Posterior cingulate gyrus (tissue), 11 donors: ENCODE measurements at regions of chr1 and their contacts with region 1.

Region 1: DNA sequence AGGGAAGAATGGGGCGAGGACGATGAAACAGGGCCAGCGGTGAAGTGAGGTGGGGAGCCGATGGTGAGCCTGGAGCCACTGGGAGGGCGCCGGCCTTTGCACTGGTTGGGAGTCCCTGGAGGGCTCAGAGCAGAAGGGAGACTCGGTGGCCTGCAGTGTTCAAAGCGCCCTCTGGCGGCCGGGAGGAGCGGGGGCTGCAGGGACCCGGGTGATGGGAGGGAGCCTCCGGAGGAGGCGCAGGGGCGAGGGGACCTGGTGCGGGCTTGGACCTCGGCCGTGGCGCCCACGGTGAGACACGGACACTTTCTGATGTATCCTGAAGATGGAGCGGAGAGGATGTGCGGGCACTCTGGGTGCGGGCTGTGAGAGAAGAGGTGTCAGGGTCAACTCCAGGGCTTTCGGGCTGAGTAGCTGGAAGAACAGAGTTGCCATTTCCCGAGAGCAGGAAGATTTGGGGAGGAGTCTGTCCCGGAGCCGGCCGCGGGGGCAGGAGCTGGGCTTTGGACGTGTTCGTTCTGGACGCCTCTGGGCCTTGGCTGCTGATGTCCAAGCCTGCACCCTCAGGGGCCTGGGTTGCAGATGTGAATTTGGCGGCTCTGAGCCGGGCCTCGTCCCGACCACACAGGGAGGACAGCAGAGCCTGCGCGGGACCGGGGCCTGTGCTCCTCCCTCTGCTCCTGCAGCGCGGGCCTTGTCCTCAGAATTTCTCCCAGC is 29.7 kb downstream of the HEYL start:
- DNase-seq: peak in 4 of 10 donors; percentile 21 to 83 (median 40)

Region 2: GRCh38 chr1:39653546-39654031 is 43.8 kb after region 1 on chr1:
- intact Hi-C with region 1: loop called (anchors 1 kb)
- DNase-seq: peak; percentile 60 to 97 (median 83)

Region 3: DNA sequence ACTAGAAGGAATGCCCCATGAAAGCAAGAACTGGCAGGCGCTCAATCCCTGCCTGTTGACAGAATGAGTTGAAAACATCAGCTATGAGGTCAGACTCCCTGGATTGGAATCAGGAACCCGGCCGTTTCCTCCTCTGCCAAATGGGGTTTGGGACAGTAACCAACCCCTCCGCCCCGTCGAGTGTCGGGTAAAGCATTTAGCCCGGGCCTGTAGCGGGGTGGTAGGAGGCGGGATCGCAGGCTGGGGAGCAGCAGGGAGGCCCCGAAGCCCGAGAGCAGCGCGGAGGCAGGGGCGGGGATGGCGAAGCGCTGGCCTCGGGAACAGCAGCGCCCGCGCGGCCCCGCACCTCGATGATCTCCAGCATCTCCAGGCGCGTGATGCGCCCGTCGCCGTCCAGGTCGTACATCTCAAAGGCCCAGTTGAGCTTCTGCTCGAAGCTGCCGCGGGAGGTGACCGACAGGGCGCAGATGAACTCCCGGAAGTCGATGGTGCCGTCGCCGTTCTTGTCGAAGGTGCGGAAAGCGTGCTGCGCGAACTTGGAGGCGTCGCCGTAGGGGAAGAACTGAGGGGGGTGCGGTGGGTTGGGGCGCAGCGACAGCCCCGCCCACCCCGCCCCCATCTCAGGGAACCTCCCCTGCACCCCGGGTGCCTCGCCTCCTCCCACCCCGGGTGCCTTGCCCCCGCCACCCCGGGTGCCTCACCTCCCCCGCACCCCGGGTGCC is 74.0 kb after region 1 on chr1:
- intact Hi-C with region 1: no loop called
- DNase-seq: no peak

Region 4: GRCh38 chr1:39720094-39720999 is 110.6 kb after region 1 on chr1:
- intact Hi-C with region 1: loop called (anchors 2 kb)
- DNase-seq: no peak